CD4-positive, alpha-beta memory T cell (primary cell): ENCODE measurements at regions of chr11 and their contacts with region 1.

Region 1: DNA sequence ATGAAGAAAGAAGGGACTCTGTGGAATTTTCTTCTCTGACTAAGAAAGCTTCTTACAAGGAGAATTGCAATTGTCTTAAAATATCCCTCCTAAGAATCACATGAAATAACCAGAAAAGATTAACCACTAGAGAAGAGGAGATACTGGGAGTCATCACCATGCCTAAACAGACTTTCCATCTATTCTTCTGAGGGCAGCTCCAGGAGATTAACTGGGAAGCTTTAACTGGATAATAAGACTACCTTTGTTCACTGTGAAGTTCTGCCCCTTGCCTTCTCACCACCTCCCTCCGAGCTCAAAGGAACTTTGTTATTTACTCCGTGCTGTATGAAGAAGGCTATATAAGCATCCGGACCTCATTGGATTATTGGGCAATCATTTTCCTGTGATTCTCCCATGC is 24.5 kb upstream of the MMP7 start:
- DNase-seq: no peak
- H3K4me3 ChIP-seq: no peak overlapping the region
- H3K4me3 Mint-ChIP-seq: no peak overlapping the region
- H3K27ac ChIP-seq: no peak overlapping the region
- H3K27ac Mint-ChIP-seq: no peak overlapping the region
- H3K4me1 ChIP-seq: peaks cover 10% of the 10 kb centered on the region
- H3K4me1 Mint-ChIP-seq: peaks cover 9 to 12% (median 11%) of the 10 kb centered on the region in 4 donors
- H3K27me3 ChIP-seq: no peaks in the 10 kb centered on the region
- H3K27me3 Mint-ChIP-seq: peaks cover 0 to 4% of the 10 kb centered on the region in 2 donors

Region 2: DNA sequence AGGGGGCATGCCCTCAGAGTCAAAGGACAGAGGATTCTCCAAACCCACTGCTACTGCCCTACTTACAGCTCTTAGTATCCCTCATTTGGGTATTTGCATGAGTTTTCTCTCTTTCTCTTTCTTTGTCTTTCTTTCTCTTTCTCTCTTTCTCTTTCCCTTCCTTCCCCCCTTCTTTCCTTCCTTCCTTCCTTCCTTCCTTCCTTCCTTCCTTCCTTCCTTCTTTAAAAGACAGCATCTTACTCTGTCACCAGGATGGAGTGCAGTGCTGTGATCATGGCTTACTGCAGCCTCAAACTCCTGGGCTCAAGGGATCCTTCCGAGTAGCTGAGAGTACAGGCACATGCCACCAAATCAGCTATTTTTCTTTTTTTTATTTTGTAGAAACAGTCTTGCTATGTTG is 10.5 kb before region 1 on chr11:
- CTCF ChIA-PET with region 1: interaction called, 10 read pairs
- POLR2A ChIA-PET with region 1: no interaction called
- intact Hi-C with region 1: no loop called
- DNase-seq: no peak
- H3K4me3 ChIP-seq: no peak overlapping the region
- H3K4me3 Mint-ChIP-seq: no peak overlapping the region
- H3K27ac ChIP-seq: no peak overlapping the region
- H3K27ac Mint-ChIP-seq: no peak overlapping the region
- H3K4me1 ChIP-seq: no peaks in the 10 kb centered on the region
- H3K4me1 Mint-ChIP-seq: peaks cover 0 to 3% (median 0%) of the 10 kb centered on the region in 4 donors
- H3K27me3 ChIP-seq: no peaks in the 10 kb centered on the region
- H3K27me3 Mint-ChIP-seq: peaks cover 0 to 4% of the 10 kb centered on the region in 2 donors

Region 3: GRCh38 chr11:102683277-102683676 is 128.2 kb after region 1 on chr11:
- CTCF ChIA-PET with region 1: no interaction called
- POLR2A ChIA-PET with region 1: no interaction called
- intact Hi-C with region 1: no loop called
- DNase-seq: no peak
- H3K4me3 ChIP-seq: no peak overlapping the region
- H3K4me3 Mint-ChIP-seq: no peak overlapping the region
- H3K27ac ChIP-seq: no peak overlapping the region
- H3K27ac Mint-ChIP-seq: no peak overlapping the region
- H3K4me1 ChIP-seq: no peaks in the 10 kb centered on the region
- H3K4me1 Mint-ChIP-seq: no peaks in the 10 kb centered on the region
- H3K27me3 ChIP-seq: no peaks in the 10 kb centered on the region
- H3K27me3 Mint-ChIP-seq: peaks cover 15 to 25% of the 10 kb centered on the region in 2 donors

Region 4: GRCh38 chr11:102981324-102981910 is 426.3 kb after region 1 on chr11:
- CTCF ChIA-PET with region 1: no interaction called
- POLR2A ChIA-PET with region 1: no interaction called
- intact Hi-C with region 1: no loop called
- DNase-seq: no peak
- H3K4me3 ChIP-seq: no peak overlapping the region
- H3K4me3 Mint-ChIP-seq: no peak overlapping the region
- H3K27ac ChIP-seq: no peak overlapping the region
- H3K27ac Mint-ChIP-seq: no peak overlapping the region
- H3K4me1 ChIP-seq: no peaks in the 10 kb centered on the region
- H3K4me1 Mint-ChIP-seq: no peaks in the 10 kb centered on the region
- H3K27me3 ChIP-seq: no peaks in the 10 kb centered on the region
- H3K27me3 Mint-ChIP-seq: peaks cover 1 to 5% of the 10 kb centered on the region in 2 donors